Activated CD8-positive, alpha-beta memory T cell treated with anti-CD3 and anti-CD28 coated beads, Interleukin-2, amount 10 ng/mL, durations not matched to agents 7 days and 5 days (primary cell): ENCODE measurements at regions of chr4 and their contacts with region 1.

Region 1: DNA sequence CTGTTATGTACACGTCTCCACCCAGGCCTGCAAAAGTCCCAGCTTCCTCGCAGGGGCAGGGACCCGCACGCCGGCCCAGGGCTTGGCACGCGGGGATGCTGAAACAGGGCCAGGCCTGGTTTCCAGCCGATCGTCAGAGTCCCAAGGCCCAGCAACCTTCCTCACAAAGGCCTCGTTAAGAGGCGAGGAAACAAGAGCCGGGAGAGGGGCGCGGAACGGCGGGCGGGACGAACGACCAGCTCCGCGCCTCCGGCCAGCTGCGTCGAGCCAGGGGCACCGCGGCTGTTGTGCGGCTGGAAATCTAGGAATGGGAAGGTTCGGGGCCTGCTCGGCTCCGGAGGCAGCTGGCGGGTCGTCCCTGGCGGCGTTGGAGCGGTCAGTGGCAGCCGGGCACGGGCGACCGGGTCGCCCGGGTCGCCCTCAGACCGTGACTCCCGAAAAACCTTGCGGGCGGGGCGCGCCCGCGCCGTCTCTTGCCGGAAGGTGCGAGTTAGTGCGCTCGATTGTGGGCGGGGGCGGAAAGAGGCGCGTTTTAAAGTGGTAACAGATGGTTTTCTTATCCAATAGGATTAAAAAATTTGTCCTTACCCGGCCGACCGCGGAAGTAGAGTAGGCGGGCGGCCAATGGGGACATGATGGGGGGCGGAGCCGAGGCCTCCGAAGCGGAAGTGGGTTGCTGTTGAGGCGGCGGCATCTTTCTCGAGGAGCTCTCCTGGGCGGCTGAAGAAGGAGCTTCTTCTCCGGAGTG is at the start of gene RNF4:
- DNase-seq: peak; percentile 98
- ATAC-seq: peak; percentile 85
- H3K4me3 Mint-ChIP-seq: peak within 1 kb of the TSS; percentile 93
- H3K27ac Mint-ChIP-seq: peak within 1 kb of the TSS; percentile 98
- H3K4me1 Mint-ChIP-seq: peaks cover 46% of the 10 kb centered on the region
- H3K27me3 Mint-ChIP-seq: no peaks in the 10 kb centered on the region
- total RNA-seq, gene RNF4: 108 to 116 TPM

Region 2: GRCh38 chr4:2412885-2413716 is 55.5 kb before region 1 on chr4:
- CTCF ChIA-PET with region 1: interaction called, 14 read pairs
- DNase-seq: peak; percentile 98
- ATAC-seq: peak; percentile 81
- H3K4me3 Mint-ChIP-seq: peak overlapping the region; percentile 63
- H3K27ac Mint-ChIP-seq: peak overlapping the region; percentile 97
- H3K4me1 Mint-ChIP-seq: peaks cover 73% of the 10 kb centered on the region
- H3K27me3 Mint-ChIP-seq: peaks cover 10% of the 10 kb centered on the region

Region 3: GRCh38 chr4:2484993-2485392 is 16.4 kb after region 1 on chr4:
- CTCF ChIA-PET with region 1: interaction called, 12 read pairs
- DNase-seq: peak; percentile 88
- ATAC-seq: peak; percentile 89
- H3K4me3 Mint-ChIP-seq: peak overlapping the region; percentile 47
- H3K27ac Mint-ChIP-seq: peak overlapping the region; percentile 80
- H3K4me1 Mint-ChIP-seq: peaks cover 88% of the 10 kb centered on the region
- H3K27me3 Mint-ChIP-seq: no peaks in the 10 kb centered on the region

Region 4: GRCh38 chr4:2741626-2742025 is 273.0 kb after region 1 on chr4:
- CTCF ChIA-PET with region 1: no interaction called
- DNase-seq: no peak
- ATAC-seq: no peak
- H3K4me3 Mint-ChIP-seq: no peak overlapping the region
- H3K27ac Mint-ChIP-seq: no peak overlapping the region
- H3K4me1 Mint-ChIP-seq: peaks cover 30% of the 10 kb centered on the region
- H3K27me3 Mint-ChIP-seq: no peaks in the 10 kb centered on the region